Activated CD8-positive, alpha-beta T cell treated with anti-CD3 and anti-CD28 coated beads, Interleukin-2, amount 10 ng/mL, durations not matched to agents 7 days and 5 days (primary cell): ENCODE measurements at regions of chr6 and their contacts with region 1.

Region 1: GRCh38 chr6:144104898-144105487 is 9.6 kb upstream of the SF3B5 start:
- DNase-seq: peak; percentile 65
- ATAC-seq: peak; percentile 84
- H3K4me3 Mint-ChIP-seq: no peak overlapping the region
- H3K27ac Mint-ChIP-seq: no peak overlapping the region
- H3K4me1 Mint-ChIP-seq: peaks cover 4% of the 10 kb centered on the region
- H3K27me3 Mint-ChIP-seq: peaks cover 2% of the 10 kb centered on the region

Region 2: DNA sequence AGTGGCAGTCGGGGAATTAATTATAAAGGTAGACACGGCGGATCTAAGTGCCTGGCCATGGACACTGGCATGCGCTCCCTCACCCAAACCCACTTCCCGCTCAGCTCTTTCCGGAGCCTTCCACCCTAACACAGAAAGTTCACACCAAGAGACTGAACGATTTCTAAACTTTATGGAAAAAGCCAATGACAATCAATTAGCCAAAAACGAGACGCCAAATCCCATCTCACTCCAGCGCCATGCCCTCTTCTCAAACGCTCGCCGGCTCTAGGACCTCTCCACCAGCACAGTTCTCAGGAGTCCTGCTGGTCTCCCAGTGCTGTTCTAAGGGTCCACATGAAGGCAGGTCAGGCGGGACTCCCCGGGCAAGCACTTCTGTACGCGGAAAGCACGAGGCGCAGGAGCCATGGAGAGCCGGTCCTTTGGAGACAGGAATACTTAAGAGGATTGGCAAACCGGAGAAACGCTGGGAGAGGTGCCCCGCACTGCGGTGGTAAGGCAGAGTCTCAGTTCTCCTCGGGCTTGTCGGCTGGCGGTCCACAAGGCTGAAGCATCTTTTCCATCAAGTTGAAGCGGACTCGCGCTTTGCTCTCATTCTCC is 10.2 kb before region 1 on chr6:
- CTCF ChIA-PET with region 1: no interaction called
- POLR2A ChIA-PET with region 1: no interaction called
- DNase-seq: peak; percentile 25
- ATAC-seq: peak; percentile 14
- H3K4me3 Mint-ChIP-seq: peak overlapping the region; percentile 96
- H3K27ac Mint-ChIP-seq: peak overlapping the region; percentile 99
- H3K4me1 Mint-ChIP-seq: peaks cover 33% of the 10 kb centered on the region
- H3K27me3 Mint-ChIP-seq: no peaks in the 10 kb centered on the region

Region 3: DNA sequence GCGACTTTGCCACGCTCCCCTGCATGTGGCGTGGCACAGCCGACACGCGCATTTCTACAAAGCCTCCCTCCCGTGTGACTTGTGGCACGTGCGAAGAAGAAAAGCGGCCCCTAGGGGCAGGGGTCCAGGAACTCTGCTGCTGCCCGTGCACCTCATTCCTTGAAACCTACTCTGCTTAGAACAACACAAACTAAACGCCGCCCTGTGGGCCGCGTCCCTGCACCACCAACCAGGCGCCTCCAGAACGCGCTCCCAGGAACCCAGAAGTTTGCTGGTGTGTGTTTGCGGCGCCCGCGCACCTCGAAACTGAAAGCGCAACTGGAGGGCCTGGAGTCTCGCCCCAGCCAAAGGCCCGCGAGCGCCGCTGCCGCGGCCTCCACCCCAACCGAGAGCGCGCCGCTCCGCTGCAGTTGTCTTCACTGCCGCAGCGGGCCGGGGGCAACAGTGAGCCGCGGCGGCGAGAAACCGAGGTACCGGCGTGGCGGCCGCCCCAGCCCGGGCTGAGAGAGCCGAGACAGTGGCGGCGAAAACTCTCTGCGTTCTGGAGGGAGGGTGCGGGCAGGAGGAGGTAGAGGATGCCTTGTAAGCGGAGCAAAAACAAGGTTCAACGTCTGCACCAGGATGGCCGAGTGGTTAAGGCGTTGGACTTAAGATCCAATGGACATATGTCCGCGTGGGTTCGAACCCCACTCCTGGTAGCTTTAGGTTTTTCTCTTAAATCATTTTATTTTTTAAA is 111.1 kb after region 1 on chr6:
- CTCF ChIA-PET with region 1: interaction called, 36 read pairs
- POLR2A ChIA-PET with region 1: no interaction called
- DNase-seq: peak; percentile 94
- ATAC-seq: peak; percentile 95
- H3K4me3 Mint-ChIP-seq: peak overlapping the region; percentile 87
- H3K27ac Mint-ChIP-seq: peak overlapping the region; percentile 98
- H3K4me1 Mint-ChIP-seq: peaks cover 32% of the 10 kb centered on the region
- H3K27me3 Mint-ChIP-seq: peaks cover 4% of the 10 kb centered on the region